Vagina (tissue), 2 donors: ENCODE measurements at regions of chr18 and their contacts with region 1.

Region 1: DNA sequence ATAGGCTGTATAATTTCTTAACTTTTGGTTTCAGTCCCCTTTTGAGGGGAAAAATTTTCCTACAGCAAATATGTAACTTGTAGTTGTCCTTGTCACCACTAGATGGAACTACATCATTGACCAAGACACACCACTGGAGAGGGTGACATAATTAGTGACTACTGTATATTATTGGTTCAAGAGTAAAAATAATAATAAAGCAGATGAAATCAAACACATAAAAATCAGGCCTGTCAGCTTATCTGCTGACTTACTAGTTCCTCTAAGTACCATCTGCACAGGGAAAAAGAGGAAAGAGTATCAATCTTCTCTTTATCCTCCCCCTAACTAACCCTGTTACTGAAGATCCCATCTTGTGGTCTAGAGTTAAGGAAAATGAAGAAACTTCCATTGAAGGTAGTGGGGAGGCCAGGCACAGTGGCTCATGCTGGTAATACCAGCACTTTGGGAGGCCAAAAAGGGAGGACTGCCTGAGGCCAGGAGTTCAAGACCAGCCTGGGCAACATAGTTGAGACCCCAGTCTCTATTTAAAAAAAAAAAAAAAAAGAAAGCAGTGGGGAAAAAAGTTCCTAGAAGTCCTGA is 29.6 kb upstream of the ENOSF1 start:
- DNase-seq: no peak
- H3K4me3 ChIP-seq: no peak overlapping the region
- H3K27ac ChIP-seq: no peak overlapping the region
- H3K4me1 ChIP-seq: no peaks in the 10 kb centered on the region
- H3K27me3 ChIP-seq: no peaks in the 10 kb centered on the region
- CTCF ChIP-seq: peak; percentile 46 to 78 (median 63)
- POLR2A ChIP-seq: no peak

Region 2: DNA sequence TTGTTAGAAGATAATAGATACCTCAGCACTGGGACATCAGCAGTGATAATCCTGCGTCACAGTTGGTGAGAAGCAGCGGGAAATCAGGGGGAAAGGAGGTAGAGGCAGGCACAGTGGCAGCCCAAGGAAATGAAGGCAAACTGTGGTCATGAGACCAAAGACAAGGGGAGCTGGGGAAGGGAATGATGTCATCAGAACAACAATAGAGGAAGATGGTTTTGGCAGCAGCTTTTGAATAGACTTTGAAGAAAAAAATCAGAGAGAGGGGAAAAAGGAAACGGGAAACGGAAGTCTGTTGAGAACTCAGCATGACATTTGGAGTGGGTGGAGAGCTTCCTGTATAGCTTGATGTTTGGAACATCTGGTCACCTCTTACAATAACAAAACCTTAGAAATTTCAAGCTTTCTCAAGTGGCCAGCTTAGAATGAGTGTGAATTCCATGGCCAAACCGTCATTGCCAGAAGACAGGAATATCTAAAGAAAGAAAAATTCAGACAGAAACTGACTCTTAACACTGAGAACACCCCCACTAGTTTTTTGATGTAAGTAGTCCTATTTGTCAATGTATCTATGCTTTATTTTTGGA is 88.4 kb after region 1 on chr18:
- intact Hi-C with region 1: loop called (anchors 2 kb)
- DNase-seq: no peak
- H3K4me3 ChIP-seq: no peak overlapping the region
- H3K27ac ChIP-seq: peak overlapping the region; percentile 9
- H3K4me1 ChIP-seq: peaks cover 5% of the 10 kb centered on the region
- H3K27me3 ChIP-seq: no peaks in the 10 kb centered on the region
- CTCF ChIP-seq: no peak
- POLR2A ChIP-seq: no peak